T-cell (primary cell): ENCODE measurements at regions of chr4 and their contacts with region 1.

Region 1: GRCh38 chr4:69823481-69824186 is 36.3 kb downstream of the SULT1E1 start:
- DNase-seq: peak in 34 of 35 experiments; percentile 15 to 68 (median 48)
- ATAC-seq: peak; percentile 87 to 99 (median 94)
- H3K4me3 ChIP-seq: no peak overlapping the region
- H3K4me3 Mint-ChIP-seq: no peak overlapping the region
- H3K27ac ChIP-seq: no peak overlapping the region
- H3K27ac Mint-ChIP-seq: peak overlapping the region; percentile 5 to 75
- H3K4me1 ChIP-seq: peaks cover 0 to 8% of the 10 kb centered on the region in 2 experiments
- H3K4me1 Mint-ChIP-seq: peaks cover 9 to 18% (median 17%) of the 10 kb centered on the region in 3 donors
- H3K27me3 ChIP-seq: no peaks in the 10 kb centered on the region
- H3K27me3 Mint-ChIP-seq: no peaks in the 10 kb centered on the region

Region 2: GRCh38 chr4:69689599-69689998 is 134.0 kb before region 1 on chr4:
- CTCF ChIA-PET with region 1: interaction called, 8 to 12 read pairs
- POLR2A ChIA-PET with region 1: no interaction called
- DNase-seq: peak in 1 of 35 experiments; percentile 65
- ATAC-seq: peak in 1 of 4 experiments; percentile 45
- H3K4me3 ChIP-seq: no peak overlapping the region
- H3K4me3 Mint-ChIP-seq: peak overlapping the region in 1 of 3 donors; percentile 13
- H3K27ac ChIP-seq: no peak overlapping the region
- H3K27ac Mint-ChIP-seq: no peak overlapping the region
- H3K4me1 ChIP-seq: peaks cover 0 to 3% of the 10 kb centered on the region in 2 experiments
- H3K4me1 Mint-ChIP-seq: peaks cover 0 to 6% (median 4%) of the 10 kb centered on the region in 3 donors
- H3K27me3 ChIP-seq: no peaks in the 10 kb centered on the region
- H3K27me3 Mint-ChIP-seq: no peaks in the 10 kb centered on the region

Region 3: DNA sequence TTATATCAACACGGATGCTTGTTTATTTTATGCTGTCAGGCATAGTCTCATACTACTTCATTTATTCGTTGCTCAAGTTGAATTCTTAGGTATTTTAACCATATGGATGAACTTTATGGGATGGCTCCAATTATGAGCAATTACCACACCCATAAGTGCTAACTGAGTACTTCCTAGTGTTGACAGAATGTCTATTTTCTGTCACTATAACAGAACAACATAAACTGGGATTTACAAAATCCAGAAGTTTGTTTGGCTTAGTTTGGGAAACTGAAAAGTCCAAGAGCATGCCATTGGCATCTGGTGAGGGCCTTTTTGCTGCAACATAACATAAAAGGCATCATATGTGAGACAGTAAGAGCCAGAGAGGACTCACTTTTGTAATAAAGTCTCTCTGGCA is 15.3 kb after region 1 on chr4:
- CTCF ChIA-PET with region 1: interaction called, 3 to 4 read pairs
- POLR2A ChIA-PET with region 1: interaction called in 1 of 2 experiments, 16 read pairs
- DNase-seq: no peak
- ATAC-seq: no peak
- H3K4me3 ChIP-seq: no peak overlapping the region
- H3K4me3 Mint-ChIP-seq: no peak overlapping the region
- H3K27ac ChIP-seq: no peak overlapping the region
- H3K27ac Mint-ChIP-seq: no peak overlapping the region
- H3K4me1 ChIP-seq: no peaks in the 10 kb centered on the region
- H3K4me1 Mint-ChIP-seq: peaks cover 0 to 4% (median 4%) of the 10 kb centered on the region in 3 donors
- H3K27me3 ChIP-seq: no peaks in the 10 kb centered on the region
- H3K27me3 Mint-ChIP-seq: no peaks in the 10 kb centered on the region

Region 4: GRCh38 chr4:69881173-69881773 is 57.6 kb after region 1 on chr4:
- CTCF ChIA-PET with region 1: interaction called, 7 to 11 read pairs
- POLR2A ChIA-PET with region 1: no interaction called
- DNase-seq: peak in 24 of 35 experiments; percentile 1 to 57 (median 8)
- ATAC-seq: peak in 3 of 4 experiments; percentile 49 to 77 (median 60)
- H3K4me3 ChIP-seq: no peak overlapping the region
- H3K4me3 Mint-ChIP-seq: no peak overlapping the region
- H3K27ac ChIP-seq: no peak overlapping the region
- H3K27ac Mint-ChIP-seq: no peak overlapping the region
- H3K4me1 ChIP-seq: no peaks in the 10 kb centered on the region
- H3K4me1 Mint-ChIP-seq: no peaks in the 10 kb centered on the region
- H3K27me3 ChIP-seq: no peaks in the 10 kb centered on the region
- H3K27me3 Mint-ChIP-seq: no peaks in the 10 kb centered on the region